Activated CD4-positive, alpha-beta T cell treated with anti-CD3 and anti-CD28 coated beads for 36 hours (primary cell): ENCODE measurements at regions of chrX and their contacts with region 1.

Region 1: GRCh38 chrX:22748093-22748999 is 251.4 kb upstream of the DDX53 start:
- DNase-seq: peak; percentile 52
- ATAC-seq: peak; percentile 51
- H3K4me3 Mint-ChIP-seq: no peak overlapping the region
- H3K27ac Mint-ChIP-seq: no peak overlapping the region
- H3K4me1 Mint-ChIP-seq: no peaks in the 10 kb centered on the region
- H3K27me3 Mint-ChIP-seq: peaks cover 3% of the 10 kb centered on the region

Region 2: DNA sequence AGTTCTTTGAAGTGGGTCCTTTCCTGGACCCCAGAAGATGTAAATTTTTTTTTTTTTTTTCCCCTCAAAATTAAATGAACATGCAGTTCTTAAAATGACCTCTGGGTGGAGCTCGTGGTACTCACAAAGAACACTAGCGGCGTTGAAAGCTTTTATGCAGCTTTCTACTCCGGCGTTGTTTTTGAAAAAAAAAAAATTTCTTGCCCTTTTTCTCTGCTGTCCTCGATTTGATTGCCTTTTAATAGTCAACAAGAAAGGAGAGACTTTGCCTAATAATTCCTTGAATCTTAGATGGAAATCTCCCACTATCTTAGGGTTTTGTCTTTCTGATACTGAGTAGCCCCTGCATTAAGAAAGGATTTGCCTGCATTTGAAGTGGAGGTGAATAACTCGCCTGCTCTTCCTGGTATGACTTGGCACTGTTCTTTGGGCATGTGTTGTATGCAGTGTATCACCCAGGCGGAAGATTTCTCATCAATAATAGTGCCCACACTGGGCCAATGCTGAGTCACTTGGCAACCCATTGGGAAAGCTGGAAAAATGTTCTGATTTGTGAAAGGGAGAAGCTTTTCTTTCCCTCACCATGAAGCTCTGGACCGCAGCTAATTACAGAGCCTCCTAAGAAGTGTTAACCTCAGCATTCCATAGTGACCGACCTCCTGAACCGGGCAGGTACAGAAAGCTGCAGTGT is 612.2 kb before region 1 on chrX:
- CTCF ChIA-PET with region 1: interaction called, 8 read pairs
- POLR2A ChIA-PET with region 1: no interaction called
- intact Hi-C with region 1: loop called in 1 of 2 experiments (anchors 1 kb)
- DNase-seq: peak; percentile 12
- ATAC-seq: peak; percentile 49
- H3K4me3 Mint-ChIP-seq: no peak overlapping the region
- H3K27ac Mint-ChIP-seq: peak overlapping the region; percentile 47
- H3K4me1 Mint-ChIP-seq: peaks cover 15% of the 10 kb centered on the region
- H3K27me3 Mint-ChIP-seq: no peaks in the 10 kb centered on the region